OCI-LY7 (cell line): ENCODE measurements at regions of chr19 and their contacts with region 1.

Region 1: GRCh38 chr19:16371540-16371986 is 46.9 kb downstream of the KLF2 start:
- DNase-seq: peak; percentile 92
- H3K4me3 ChIP-seq: peak overlapping the region; percentile 51
- H3K27ac ChIP-seq: peak overlapping the region; percentile 86
- H3K4me1 ChIP-seq: peaks cover 70% of the 10 kb centered on the region
- CTCF ChIP-seq: no peak

Region 2: DNA sequence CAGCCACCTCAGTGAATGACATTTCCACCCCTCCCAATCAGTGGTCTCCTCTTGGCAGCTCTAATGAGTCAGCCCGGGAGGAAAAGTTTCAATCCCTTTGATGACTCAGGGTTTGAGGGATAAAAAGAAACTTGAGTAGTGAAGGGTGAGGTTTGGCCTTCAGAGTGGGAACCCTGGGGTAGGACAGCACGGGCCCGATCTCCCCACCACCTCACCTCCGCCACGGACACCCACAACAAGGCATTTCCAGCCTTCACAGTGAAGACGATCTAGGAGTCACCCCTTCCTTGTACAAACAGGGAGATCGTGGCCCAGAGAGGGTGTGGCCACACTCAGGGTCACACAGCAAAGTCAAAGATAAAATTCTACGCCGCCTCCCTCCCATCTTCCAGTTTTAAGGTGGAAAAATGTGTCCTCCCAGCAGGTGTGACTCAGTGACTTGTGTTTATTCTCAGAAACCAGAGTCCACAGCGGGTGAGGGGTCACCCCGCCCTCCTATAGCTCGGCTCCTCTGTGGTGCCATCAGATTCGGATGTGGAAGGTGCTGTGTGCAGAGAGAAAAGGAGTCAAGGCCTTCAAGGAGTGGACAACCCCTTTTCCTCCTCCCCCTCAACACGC is 210.5 kb before region 1 on chr19:
- CTCF ChIA-PET with region 1: no interaction called
- POLR2A ChIA-PET with region 1: no interaction called
- intact Hi-C with region 1: no loop called
- DNase-seq: no peak
- H3K4me3 ChIP-seq: no peak overlapping the region
- H3K27ac ChIP-seq: no peak overlapping the region
- H3K4me1 ChIP-seq: peaks cover 13% of the 10 kb centered on the region
- CTCF ChIP-seq: no peak

Region 3: DNA sequence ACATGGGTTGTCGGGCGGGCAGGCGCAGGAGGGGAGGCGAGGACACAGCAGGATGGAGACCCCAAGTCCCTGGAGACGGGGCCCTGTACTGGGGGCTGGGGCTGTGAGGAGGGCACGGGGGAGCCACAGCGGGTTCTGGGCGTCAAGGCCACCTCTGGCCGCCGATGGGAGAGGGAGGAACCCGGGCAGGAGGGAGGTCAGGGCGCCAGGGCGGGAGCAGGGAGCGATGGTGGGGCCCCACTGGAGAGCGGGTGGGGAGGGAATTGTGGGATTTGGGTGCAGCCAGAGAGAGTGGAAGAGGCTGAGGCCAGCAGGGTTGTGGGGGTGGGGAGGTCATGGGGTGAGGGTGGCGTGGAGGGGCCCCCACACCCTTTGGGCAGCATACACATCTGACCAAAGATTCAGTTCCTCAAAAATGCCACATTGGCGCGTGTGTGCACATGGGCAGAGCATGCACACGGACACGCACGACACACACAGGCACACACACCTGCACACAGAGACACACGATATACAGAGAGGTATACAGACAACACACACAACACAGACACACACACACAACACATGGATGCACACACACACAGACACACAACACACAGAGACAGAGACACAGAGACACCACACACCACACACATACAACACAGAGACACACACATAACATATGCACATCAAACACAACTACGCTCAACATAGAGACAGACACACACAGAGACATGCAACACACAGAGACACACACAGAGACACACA is 118.9 kb before region 1 on chr19:
- CTCF ChIA-PET with region 1: interaction called, 4 read pairs
- POLR2A ChIA-PET with region 1: interaction called, 4 read pairs
- intact Hi-C with region 1: loop called (anchors 2 kb)
- DNase-seq: peak; percentile 74
- H3K4me3 ChIP-seq: no peak overlapping the region
- H3K27ac ChIP-seq: no peak overlapping the region
- H3K4me1 ChIP-seq: peaks cover 35% of the 10 kb centered on the region
- CTCF ChIP-seq: no peak

Region 4: DNA sequence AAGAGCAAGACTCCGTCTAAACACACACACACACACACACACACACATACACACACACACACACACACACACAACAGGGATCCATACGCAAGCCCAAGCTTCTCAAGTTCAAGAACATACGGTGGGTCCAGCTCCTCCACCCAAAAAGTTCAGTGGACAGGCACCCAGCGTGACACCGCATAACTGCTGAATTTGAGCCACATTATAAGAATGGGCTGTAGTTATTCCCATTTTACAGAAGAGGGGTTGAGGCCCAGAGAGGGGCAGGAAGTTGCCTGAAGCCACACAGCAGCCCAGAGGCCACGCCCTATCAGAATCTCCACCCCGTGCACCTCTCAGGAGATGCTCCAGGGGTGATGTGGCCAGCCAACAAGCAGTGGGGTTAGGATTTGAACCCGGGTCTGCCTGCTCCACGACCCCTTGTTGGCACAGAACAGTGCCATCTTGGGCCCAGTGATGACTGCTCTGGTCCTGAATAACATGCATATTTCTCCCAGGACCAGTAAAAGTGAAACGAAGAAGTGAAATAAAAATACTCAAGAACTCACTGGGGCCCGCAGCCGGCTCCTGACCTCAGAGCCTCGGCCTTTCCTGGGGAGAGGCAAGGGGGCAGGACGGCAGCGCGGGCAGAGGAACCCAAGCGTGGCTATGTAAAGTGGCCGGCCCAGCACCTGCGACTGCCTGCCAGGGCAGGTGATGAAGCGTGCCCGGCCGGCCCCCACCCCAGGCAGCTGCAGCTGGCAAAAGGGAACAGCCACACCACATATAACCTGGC is 112.0 kb before region 1 on chr19:
- CTCF ChIA-PET with region 1: no interaction called
- POLR2A ChIA-PET with region 1: interaction called, 4 read pairs
- intact Hi-C with region 1: loop called (anchors 1 kb)
- DNase-seq: peak; percentile 96
- H3K4me3 ChIP-seq: peak overlapping the region; percentile 45
- H3K27ac ChIP-seq: peak overlapping the region; percentile 91
- H3K4me1 ChIP-seq: peaks cover 81% of the 10 kb centered on the region
- CTCF ChIP-seq: peak; percentile 19; the same call in 1 of the 2 replicates

Region 5: GRCh38 chr19:16301999-16302694 is 69.4 kb before region 1 on chr19:
- CTCF ChIA-PET with region 1: interaction called, 3 read pairs
- POLR2A ChIA-PET with region 1: interaction called, 9 read pairs
- intact Hi-C with region 1: loop called (anchors 1 kb)
- DNase-seq: peak; percentile 90
- H3K4me3 ChIP-seq: peak overlapping the region; percentile 35
- H3K27ac ChIP-seq: peak overlapping the region; percentile 93
- H3K4me1 ChIP-seq: peaks cover 64% of the 10 kb centered on the region
- CTCF ChIP-seq: no peak

Region 6: GRCh38 chr19:16382775-16383543 is 11.4 kb after region 1 on chr19:
- CTCF ChIA-PET with region 1: interaction called, 8 read pairs
- POLR2A ChIA-PET with region 1: interaction called, 6 read pairs
- intact Hi-C with region 1: loop called (anchors 1 kb)
- DNase-seq: peak; percentile 82
- H3K4me3 ChIP-seq: peak overlapping the region; percentile 15
- H3K27ac ChIP-seq: peak overlapping the region; percentile 61
- H3K4me1 ChIP-seq: peaks cover 30% of the 10 kb centered on the region
- CTCF ChIP-seq: peak; percentile 91

Region 7: GRCh38 chr19:16394111-16394510 is 22.5 kb after region 1 on chr19:
- CTCF ChIA-PET with region 1: no interaction called
- POLR2A ChIA-PET with region 1: no interaction called
- intact Hi-C with region 1: no loop called
- DNase-seq: no peak
- H3K4me3 ChIP-seq: no peak overlapping the region
- H3K27ac ChIP-seq: no peak overlapping the region
- H3K4me1 ChIP-seq: peaks cover 7% of the 10 kb centered on the region
- CTCF ChIP-seq: no peak